AG04449 (cell line): ENCODE measurements at regions of chr3 and their contacts with region 1.

Region 1: GRCh38 chr3:128068211-128068620 is 16.0 kb downstream of the SEC61A1 start:
- DNase-seq: no peak
- H3K4me3 ChIP-seq: no peak overlapping the region
- CTCF ChIP-seq: peak; percentile 60

Region 2: DNA sequence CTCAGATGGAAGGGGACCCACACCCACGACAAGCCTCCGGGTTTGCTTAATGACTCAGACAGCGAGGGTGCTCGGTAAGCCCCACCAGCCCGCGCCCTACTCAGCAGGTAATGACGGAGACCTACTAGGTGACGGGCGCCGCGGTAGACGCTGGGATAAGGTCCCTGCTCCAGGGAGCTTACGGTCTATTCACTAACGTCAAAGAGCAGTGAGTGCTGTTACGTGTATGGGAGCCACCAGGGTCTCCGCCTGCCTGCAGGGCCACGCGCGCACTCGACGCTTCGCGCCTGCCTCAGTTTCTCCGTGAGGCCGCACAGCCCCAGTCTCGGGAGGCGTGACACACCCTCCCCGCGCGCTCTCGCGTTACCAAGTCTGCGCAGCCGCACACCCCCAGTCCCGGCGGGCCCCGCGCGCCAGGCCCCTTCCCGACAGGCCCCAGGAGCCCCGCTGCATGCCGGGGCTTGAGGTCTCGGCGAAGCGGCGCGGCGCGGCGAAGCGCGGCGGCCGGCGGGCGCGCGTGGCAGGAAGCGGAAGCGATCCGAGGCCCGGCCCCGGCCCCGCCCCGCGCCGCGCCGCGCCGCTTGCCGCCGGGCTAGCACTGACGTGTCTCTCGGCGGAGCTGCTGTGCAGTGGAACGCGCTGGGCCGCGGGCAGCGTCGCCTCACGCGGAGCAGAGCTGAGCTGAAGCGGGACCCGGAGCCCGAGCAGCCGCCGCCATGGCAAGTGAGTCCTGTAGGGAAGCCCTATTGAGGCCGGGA is 16.2 kb before region 1 on chr3 and contains the start of gene SEC61A1:
- CTCF ChIA-PET with region 1: interaction called, 19 read pairs
- POLR2A ChIA-PET with region 1: interaction called, 3 read pairs
- DNase-seq: peak; percentile 41
- H3K4me3 ChIP-seq: peak within 1 kb of the TSS; percentile 88
- CTCF ChIP-seq: no peak

Region 3: DNA sequence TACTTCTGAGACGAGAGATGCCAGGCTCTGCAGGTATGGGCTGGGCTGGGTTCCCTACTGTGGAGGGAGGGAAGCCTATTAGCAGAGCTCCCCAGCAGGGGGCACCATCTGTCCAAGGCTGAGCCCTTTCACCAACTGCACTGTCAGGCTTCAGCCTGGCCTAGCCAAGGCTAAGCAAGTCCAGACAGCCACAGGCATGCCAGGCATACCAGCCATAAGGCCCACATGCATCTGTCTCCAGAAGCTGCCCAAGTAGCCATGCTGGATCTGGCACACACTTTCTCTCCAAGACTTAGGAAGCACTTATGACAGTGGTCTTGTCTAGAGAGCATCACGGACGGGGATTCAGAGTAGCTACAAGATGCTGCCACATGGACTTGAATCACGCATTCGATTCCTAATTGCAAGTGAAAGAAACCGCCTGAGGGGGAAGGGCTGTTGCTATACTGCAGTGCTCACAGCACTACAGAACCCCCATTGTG is 27.0 kb after region 1 on chr3:
- CTCF ChIA-PET with region 1: interaction called, 17 read pairs
- POLR2A ChIA-PET with region 1: no interaction called
- DNase-seq: peak; percentile 82
- H3K4me3 ChIP-seq: no peak overlapping the region
- CTCF ChIP-seq: peak; percentile 90

Region 4: DNA sequence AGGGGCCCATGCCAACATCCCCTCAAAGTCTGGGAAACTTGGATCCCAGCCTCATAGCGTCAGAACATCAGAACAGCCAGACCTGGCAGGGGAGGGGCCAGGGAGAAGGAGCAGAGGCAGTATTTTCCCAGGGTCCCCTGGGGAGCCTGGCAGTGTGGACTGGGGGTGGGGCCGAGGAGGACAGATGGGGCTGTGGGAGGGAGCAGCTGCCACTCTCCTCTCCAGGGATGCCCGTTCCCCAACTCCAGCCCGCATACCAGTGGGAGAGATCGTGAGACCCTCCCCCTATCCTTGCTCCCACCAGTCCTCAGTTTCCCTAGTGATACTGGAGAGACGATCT is 404.9 kb after region 1 on chr3:
- CTCF ChIA-PET with region 1: no interaction called
- POLR2A ChIA-PET with region 1: no interaction called
- DNase-seq: no peak
- H3K4me3 ChIP-seq: no peak overlapping the region
- CTCF ChIP-seq: no peak